Heart left ventricle (tissue), 16 donors: ENCODE measurements at regions of chr20 and their contacts with region 1.

Region 1: DNA sequence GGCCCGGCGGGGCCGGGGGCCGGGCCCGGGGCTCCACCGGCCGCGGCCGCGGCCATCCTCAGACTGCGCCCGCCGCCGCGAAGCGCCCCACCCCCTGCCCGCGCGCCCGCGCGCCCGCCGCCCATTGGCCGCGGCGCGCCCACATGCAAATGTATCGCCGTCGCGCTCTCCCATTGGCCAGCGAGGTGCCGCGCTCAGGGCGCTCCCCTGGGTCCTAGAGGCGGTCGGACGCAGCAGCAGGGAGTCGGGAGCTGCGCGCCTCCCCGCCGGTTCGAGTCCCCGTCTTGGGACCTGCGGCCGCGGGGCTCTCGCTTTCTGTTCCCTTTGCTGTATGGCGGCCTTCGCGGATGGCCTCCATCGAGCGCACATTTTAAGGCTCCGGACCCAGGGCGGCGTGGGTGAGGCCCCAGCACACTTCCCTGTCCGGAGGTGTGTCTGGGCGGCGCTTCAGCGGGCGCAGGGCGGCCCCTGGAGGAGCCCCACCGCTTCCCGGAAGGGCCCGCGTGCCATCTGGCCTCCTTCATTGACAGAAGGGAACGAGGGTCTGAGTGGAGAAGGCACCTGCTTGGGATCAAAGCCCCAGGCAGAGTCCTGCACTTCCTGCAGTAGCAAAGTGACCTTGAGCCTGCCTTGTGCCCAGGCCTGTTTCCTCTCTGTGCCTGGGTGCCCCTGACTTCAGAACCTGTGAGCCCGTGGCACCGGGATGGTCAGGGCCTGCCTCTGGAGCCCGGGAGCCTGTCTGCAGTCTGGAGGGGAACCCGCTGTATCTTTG is at the start of gene CABLES2:
- DNase-seq: peak; percentile 95 to 97 (median 97)
- ATAC-seq: peak; percentile 82 to 93 (median 90)
- H3K4me3 ChIP-seq: peak within 1 kb of the TSS; percentile 15 to 79 (median 64)
- H3K27ac ChIP-seq: peak within 1 kb of the TSS in 9 of 12 donors; percentile 35 to 80 (median 52)
- H3K4me1 ChIP-seq: peaks cover 0 to 33% (median 24%) of the 10 kb centered on the region in 12 donors
- H3K27me3 ChIP-seq: no peaks in the 10 kb centered on the region
- CTCF ChIP-seq: peak in 4 of 12 donors; percentile 4 to 35 (median 20)
- POLR2A ChIP-seq: peak in 1 of 2 donors; percentile 32
- total RNA-seq, gene CABLES2: 6.1 to 12.0 (median 8.8) TPM

Region 2: DNA sequence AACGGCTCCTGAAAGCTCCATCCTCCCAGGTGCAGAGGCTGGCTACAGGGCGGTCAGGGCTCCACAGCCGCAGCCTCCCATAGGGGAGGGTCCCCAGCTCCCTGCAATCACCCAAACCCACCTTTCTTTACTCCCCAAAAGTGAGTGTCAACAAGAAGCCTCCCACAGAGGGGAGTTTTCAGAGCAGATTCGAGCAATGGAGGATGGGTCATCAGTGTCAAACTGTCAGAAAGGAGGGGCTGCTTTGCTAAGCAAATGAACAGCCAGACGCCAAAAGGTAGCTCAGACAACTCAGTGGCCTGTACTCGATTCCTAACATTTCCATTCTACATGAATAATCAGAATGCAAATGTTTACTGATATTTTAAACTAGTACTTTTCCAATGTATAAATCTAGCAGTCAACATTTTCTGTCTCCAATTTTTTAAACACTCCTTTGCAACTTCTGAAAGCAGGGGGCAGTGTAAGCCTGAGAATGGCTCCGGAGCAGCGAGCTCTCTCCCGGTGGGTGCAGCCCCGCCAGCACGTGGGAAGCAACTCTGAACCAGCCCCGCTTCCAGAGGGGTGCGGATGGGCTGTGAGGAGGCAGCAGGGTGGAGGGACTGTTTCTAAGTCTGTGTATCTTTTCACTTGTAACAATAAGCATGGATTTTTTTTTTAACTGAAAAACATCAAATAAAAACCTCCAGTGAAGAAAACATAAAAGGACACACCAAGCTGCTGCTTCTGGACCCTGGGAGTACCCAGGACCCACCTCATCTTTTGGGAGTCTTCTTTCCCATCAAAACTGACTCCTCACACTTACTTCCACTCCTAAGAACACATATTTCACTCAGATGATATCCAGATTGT is 396.6 kb before region 1 on chr20:
- intact Hi-C with region 1: loop called in 1 of 10 experiments (anchors 10 kb)
- DNase-seq: peak; percentile 47 to 66 (median 59)
- ATAC-seq: peak in 3 of 4 donors; percentile 47 to 78 (median 71)
- H3K4me3 ChIP-seq: no peak overlapping the region
- H3K27ac ChIP-seq: no peak overlapping the region
- H3K4me1 ChIP-seq: peaks cover 0 to 6% (median 0%) of the 10 kb centered on the region in 12 donors
- H3K27me3 ChIP-seq: no peaks in the 10 kb centered on the region
- CTCF ChIP-seq: peak; percentile 45 to 77 (median 68)
- POLR2A ChIP-seq: no peak

Region 3: DNA sequence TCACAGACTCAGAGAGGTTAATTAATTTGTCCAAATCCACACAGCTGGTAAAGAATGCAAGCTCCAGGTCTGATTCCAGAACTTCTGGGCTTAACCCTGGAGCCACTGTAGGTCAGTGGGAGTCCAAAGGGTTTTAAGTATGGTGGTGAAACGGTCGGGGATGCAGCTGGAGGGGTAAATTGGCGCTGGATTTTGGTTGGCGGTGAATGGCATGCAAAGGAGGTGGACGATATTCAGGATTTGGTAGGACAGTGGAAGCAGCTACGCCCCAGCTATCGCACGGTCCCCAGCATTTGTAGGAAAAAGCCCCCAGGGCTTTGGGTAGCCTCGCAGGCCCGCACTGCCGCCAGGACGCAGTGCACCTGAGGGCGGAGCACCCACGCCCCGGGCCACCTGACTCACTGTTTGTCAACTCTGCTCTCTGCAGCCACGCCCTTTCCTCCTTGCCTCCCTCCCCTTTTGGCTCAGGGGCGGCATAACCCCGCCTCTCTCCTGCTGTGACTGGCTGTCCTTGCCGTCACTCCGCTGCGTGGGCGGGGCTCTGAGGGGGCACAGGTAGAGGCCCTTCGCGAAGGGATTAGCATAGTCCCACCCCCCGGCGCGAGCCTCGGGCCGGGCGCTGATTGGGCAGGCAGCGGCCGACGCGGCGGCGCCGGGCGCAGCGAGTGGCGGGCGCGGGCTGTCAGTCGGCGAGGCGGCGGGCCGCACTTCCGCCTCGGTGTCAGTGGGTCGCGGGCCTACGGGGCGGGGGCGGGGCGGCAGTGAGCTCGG is 169.4 kb before region 1 on chr20 and contains the start of gene OSBPL2:
- intact Hi-C with region 1: loop called in 1 of 10 experiments (anchors 5 kb)
- DNase-seq: peak; percentile 97 to 100 (median 99)
- ATAC-seq: peak; percentile 97 to 98 (median 98)
- H3K4me3 ChIP-seq: peak within 1 kb of the TSS; percentile 63 to 96 (median 79)
- H3K27ac ChIP-seq: peak within 1 kb of the TSS; percentile 47 to 97 (median 86)
- H3K4me1 ChIP-seq: peaks cover 6 to 82% (median 45%) of the 10 kb centered on the region in 12 donors
- H3K27me3 ChIP-seq: no peaks in the 10 kb centered on the region
- CTCF ChIP-seq: no peak
- POLR2A ChIP-seq: peak; percentile 31 to 46
- total RNA-seq, gene OSBPL2: 20.7 to 57.9 (median 40.3) TPM

Region 4: GRCh38 chr20:62292108-62292507 is 115.3 kb before region 1 on chr20:
- intact Hi-C with region 1: no loop called
- DNase-seq: no peak
- ATAC-seq: peak in 1 of 4 donors; percentile 20
- H3K4me3 ChIP-seq: no peak overlapping the region
- H3K27ac ChIP-seq: no peak overlapping the region
- H3K4me1 ChIP-seq: peaks cover 0 to 8% (median 3%) of the 10 kb centered on the region in 12 donors
- H3K27me3 ChIP-seq: no peaks in the 10 kb centered on the region
- CTCF ChIP-seq: no peak
- POLR2A ChIP-seq: no peak

Region 5: DNA sequence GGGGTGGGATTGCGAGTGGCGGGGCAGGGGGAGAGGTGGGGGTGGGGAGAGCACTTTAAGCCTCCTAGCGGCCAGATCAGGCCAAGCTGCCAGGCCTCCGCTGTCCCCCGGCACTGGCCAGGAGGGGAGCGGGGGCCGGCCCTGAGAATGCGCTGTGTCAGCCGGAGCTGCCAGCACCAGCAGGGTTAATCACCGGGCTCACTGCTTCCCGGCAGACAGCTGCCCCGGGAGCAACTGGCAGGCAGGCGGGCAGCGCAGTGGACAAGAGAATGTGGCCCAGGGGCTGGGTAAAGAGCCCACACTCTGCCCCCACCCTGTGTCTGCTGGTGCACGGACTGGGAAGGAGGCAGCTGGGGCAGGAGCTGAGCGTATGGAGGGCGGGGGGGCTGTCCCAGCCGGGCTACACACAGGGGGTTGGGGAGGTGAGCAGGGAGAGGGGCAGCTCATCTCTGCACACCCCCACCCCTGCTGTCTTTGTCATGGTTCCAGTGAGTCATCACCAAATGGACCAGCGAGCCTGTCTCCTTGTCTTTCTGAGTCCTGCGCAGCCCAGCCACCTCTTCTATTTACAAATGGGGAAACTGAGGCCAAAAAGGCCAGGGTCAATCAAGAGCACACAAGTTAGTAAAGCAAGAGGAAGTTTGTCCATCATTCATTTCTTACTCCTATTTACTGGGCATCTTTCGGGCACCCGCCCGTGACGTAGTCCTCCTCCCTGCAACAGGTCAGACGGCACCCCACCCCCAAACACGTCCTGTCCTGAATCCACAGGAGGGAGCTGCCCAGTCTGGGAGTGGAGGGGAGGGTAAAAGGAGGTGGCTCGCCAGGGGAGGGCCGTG is 38.2 kb before region 1 on chr20:
- intact Hi-C with region 1: no loop called
- DNase-seq: peak in 2 of 5 donors; percentile 47 to 62
- ATAC-seq: peak in 1 of 4 donors; percentile 1
- H3K4me3 ChIP-seq: peak overlapping the region in 7 of 12 donors; percentile 7 to 96 (median 91)
- H3K27ac ChIP-seq: peak overlapping the region in 8 of 12 donors; percentile 37 to 97 (median 80)
- H3K4me1 ChIP-seq: peaks cover 6 to 71% (median 59%) of the 10 kb centered on the region in 12 donors
- H3K27me3 ChIP-seq: peaks cover 0 to 36% (median 0%) of the 10 kb centered on the region in 9 donors
- CTCF ChIP-seq: peak in 11 of 12 donors; percentile 26 to 63 (median 39)
- POLR2A ChIP-seq: no peak

Region 6: DNA sequence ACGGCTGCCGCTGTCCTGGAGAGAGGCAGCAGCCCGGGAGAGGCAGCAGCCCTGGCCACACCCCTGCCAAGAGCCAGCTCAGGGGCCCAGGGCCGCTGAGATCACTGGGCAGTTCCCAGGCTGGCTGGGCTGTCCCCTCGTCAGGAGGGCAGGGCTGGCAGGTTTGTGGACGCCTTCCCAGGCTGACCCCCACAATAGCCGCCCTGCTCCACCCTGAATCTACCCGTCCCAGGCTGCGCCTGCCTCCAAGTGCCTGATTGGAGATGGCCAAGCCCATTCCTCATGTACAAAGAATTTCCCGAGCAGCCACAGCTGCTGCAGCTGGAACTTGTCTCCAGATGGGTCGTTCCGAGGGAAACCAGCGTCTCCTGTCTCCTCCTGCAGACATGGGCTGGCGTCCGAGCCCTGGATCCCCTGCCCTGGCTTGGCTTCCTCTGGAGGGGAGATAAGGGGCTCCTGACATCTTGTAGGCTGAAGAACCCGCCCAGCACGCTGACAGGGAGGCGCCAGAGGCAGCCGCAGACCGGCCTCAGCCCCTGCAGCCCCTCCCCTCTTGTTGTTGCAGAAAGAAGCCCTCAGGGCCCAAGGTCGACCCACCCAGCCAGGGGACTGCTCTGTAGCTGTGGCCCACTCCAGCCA is 77.8 kb after region 1 on chr20:
- intact Hi-C with region 1: loop called in 3 of 10 experiments (anchors 5 to 10 kb)
- DNase-seq: peak in 1 of 5 donors; percentile 68
- ATAC-seq: peak; percentile 43 to 67 (median 58)
- H3K4me3 ChIP-seq: peak overlapping the region in 2 of 12 donors; percentile 15 to 22
- H3K27ac ChIP-seq: peak overlapping the region in 2 of 12 donors; percentile 12 to 27
- H3K4me1 ChIP-seq: peaks cover 0 to 34% (median 21%) of the 10 kb centered on the region in 12 donors
- H3K27me3 ChIP-seq: peaks cover 0 to 80% (median 27%) of the 10 kb centered on the region in 9 donors
- CTCF ChIP-seq: no peak
- POLR2A ChIP-seq: no peak

Region 7: DNA sequence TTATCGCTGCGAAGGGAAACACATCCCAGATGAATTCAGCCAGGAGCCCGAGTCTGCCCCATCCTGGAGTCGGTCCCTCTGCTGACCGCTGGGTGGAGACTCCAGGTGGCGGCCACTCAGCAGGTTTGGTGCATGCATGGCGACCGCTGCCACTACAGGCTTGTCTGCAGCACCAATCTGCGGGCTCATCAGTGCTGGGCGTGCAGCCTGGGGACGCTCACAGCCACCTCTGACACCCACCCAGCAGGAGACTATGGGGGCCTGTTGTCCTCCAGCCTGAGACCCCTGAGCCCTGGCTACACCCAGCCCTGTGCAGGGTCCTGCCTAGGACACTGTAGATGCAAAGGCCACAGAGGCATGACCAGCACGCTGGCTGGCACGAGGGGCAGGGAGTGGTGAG is 108.9 kb after region 1 on chr20:
- intact Hi-C with region 1: no loop called
- DNase-seq: peak in 2 of 5 donors; percentile 44 to 68
- ATAC-seq: peak in 3 of 4 donors; percentile 53 to 65 (median 61)
- H3K4me3 ChIP-seq: no peak overlapping the region
- H3K27ac ChIP-seq: no peak overlapping the region
- H3K4me1 ChIP-seq: peaks cover 0 to 16% (median 7%) of the 10 kb centered on the region in 12 donors
- H3K27me3 ChIP-seq: peaks cover 0 to 34% (median 0%) of the 10 kb centered on the region in 9 donors
- CTCF ChIP-seq: peak in 11 of 12 donors; percentile 26 to 57 (median 38)
- POLR2A ChIP-seq: no peak

Region 8: DNA sequence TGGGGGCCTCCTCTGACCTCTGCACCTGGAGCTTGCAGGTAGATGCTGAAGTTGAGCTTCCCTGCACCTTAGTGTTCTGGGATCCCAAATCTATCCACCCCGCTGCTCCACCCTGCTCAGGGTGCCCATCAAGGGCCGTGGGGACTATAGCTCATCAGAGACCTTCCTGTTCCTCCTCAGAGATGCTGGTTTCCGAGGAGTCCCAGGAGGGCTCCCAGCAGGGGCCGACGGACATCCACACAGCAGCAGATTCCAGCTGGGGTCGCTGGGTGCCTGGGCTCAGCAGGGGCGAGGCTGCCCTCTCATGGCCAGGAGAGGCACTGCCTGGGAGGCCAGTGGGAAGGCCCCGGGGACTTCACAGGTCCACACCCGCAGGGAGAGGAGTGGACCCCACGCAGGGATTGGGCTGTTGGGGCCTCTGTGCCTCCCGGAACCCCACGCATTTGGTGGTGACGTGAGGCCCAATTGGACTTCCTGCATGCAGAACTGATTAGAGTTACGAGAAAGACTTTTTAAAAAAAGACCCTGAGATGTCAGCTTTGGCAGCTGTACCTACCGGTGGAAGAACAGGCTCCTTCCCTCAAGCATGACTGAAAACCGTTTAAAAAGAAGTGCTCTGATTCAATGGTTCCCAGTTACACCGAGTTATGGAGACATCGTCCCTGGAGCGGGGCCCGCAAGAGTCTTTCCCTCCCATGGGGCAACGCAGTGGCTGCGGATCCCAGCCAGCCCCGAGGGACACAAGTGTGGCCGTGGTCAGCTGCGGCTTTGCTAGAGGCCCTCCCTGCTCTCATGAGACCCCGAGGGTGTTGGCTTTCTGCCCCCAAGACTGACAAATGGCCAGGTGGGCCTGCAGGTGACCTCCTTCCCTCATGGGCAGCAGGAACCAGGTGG is 209.6 kb after region 1 on chr20:
- intact Hi-C with region 1: loop called in 7 of 10 experiments (anchors 2 to 10 kb)
- DNase-seq: peak; percentile 59 to 92 (median 82)
- ATAC-seq: peak; percentile 63 to 90 (median 78)
- H3K4me3 ChIP-seq: no peak overlapping the region
- H3K27ac ChIP-seq: peak overlapping the region; percentile 44 to 96 (median 76)
- H3K4me1 ChIP-seq: peaks cover 0 to 40% (median 25%) of the 10 kb centered on the region in 12 donors
- H3K27me3 ChIP-seq: no peaks in the 10 kb centered on the region
- CTCF ChIP-seq: peak; percentile 89 to 97 (median 94)
- POLR2A ChIP-seq: no peak